Right cardiac atrium (tissue), 5 donors: ENCODE measurements at regions of chr1 and their contacts with region 1.

Region 1: GRCh38 chr1:40153073-40153770 is 8.0 kb upstream of the RLF start:
- DNase-seq: no peak
- ATAC-seq: peak; percentile 39 to 43
- H3K4me3 ChIP-seq: no peak overlapping the region
- H3K27ac ChIP-seq: no peak overlapping the region
- H3K4me1 ChIP-seq: no peaks in the 10 kb centered on the region
- H3K27me3 ChIP-seq: no peaks in the 10 kb centered on the region

Region 2: GRCh38 chr1:40096977-40097782 is 56.0 kb before region 1 on chr1 and contains the start of gene PPT1:
- intact Hi-C with region 1: no loop called
- DNase-seq: peak; percentile 78 to 93 (median 90)
- ATAC-seq: peak; percentile 96 to 97
- H3K4me3 ChIP-seq: peak within 1 kb of the TSS; percentile 83
- H3K27ac ChIP-seq: peak within 1 kb of the TSS; percentile 61
- H3K4me1 ChIP-seq: no peaks in the 10 kb centered on the region
- H3K27me3 ChIP-seq: no peaks in the 10 kb centered on the region
- total RNA-seq, gene PPT1: 37.6 to 59.0 (median 42.6) TPM

Region 3: GRCh38 chr1:40315239-40315794 is 162.1 kb after region 1 on chr1:
- intact Hi-C with region 1: loop called in 2 of 4 experiments (anchors 5 to 10 kb)
- DNase-seq: peak; percentile 82 to 93 (median 90)
- ATAC-seq: peak; percentile 86 to 89
- H3K4me3 ChIP-seq: peak overlapping the region; percentile 59
- H3K27ac ChIP-seq: no peak overlapping the region
- H3K4me1 ChIP-seq: peaks cover 3% of the 10 kb centered on the region
- H3K27me3 ChIP-seq: no peaks in the 10 kb centered on the region

Region 4: DNA sequence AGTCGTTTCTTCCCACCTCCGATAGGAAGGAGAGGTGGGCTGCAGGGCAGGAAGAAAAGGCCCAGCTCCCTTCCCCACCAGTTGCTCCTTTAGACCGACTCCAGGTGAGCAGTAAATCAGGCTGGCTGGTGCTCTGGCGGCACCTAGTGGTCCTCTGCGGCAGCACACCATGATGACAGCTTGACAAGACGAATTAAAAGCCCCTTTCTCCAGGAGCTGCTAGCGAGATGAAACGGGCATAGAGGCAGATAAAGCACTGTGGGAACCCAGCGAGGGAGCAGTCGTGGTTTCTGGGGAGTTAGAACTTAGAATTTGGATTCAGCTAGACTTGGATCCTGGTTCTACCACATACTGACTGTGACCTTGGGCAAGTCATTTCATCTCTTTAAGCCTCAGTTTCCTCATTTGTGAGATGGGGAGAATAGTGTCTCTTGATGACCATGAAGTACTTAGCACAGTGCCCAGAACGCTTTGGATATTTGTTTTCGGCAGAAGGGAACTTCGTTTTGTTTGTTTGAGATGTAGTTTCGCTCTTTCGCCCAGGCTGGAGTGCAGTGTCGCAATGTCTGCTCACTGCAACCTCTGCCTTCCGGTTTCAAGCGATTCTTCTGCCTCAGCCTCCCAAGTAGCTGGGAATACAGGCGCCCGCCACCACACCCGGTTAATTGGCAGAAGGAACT is 185.7 kb after region 1 on chr1:
- intact Hi-C with region 1: loop called in 2 of 4 experiments (anchors 5 kb)
- DNase-seq: peak; percentile 71 to 91 (median 90)
- ATAC-seq: peak; percentile 73 to 79
- H3K4me3 ChIP-seq: no peak overlapping the region
- H3K27ac ChIP-seq: no peak overlapping the region
- H3K4me1 ChIP-seq: no peaks in the 10 kb centered on the region
- H3K27me3 ChIP-seq: no peaks in the 10 kb centered on the region

Region 5: DNA sequence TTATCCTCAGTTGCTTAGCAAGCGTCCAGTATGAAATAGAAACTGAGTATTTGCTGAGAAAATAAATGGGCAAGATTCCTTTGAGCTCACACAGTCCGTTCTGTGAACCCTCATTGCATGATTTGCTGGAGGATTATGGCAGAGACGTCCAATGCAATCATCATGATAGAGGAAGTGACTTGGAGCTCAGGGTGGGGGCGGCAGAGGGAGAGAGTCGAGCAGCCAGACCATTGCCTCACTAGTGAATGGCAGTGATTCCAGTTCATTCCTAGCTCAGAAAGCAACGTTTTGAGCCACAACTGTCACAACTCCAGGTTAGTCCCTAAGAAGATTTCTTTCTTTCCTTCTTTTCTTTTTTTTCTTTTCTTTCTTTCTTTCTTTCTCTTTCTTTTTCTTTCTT is 191.4 kb after region 1 on chr1:
- intact Hi-C with region 1: loop called in 2 of 4 experiments (anchors 5 kb)
- DNase-seq: peak; percentile 47 to 79 (median 73)
- ATAC-seq: peak; percentile 73 to 81
- H3K4me3 ChIP-seq: no peak overlapping the region
- H3K27ac ChIP-seq: no peak overlapping the region
- H3K4me1 ChIP-seq: no peaks in the 10 kb centered on the region
- H3K27me3 ChIP-seq: no peaks in the 10 kb centered on the region